H1 (cell line): ENCODE measurements at regions of chr5 and their contacts with region 1.

Region 1: DNA sequence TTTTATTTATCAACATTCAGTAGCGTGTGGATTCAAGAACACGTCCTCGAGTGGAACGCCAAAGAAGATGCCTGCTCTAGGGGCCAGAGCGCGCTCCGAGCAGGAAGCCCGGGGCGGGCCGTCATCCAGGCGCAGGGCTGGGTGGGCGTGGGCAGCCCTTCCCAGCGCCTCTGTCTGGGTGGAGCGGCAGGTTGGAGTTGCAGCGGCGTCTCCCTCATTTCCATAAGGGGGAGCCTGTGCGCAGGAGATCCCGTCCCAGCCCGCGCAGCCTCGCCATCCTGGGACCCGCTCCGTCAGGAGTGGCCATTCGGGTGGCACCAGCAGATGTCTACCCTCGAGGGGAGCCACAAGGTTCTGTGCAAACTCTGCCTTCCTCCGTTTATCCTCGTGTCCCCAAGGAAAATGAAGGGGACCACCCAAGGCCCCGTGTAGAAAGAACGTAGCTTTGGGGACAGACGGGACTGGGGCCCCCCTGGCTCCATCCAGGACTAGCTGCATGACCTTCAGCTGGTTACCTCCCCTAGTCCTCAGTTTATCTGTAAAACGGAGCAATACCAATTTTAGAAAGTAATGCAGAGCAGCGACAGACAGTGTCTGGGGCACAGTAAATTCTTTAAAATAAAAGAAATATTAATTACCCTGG is 155.5 kb upstream of the SMIM23 start:
- DNase-seq: peak in 1 of 2 experiments; percentile 82
- H3K4me3 ChIP-seq: peak overlapping the region in 3 of 4 experiments; percentile 17 to 50 (median 32); a peak in 5 of 8 replicates
- H3K27ac ChIP-seq: no peak overlapping the region
- H3K4me1 ChIP-seq: no peaks in the 10 kb centered on the region; a peak in 3 of 7 replicates
- H3K27me3 ChIP-seq: peaks cover 22 to 60% (median 54%) of the 10 kb centered on the region in 4 experiments
- CTCF ChIP-seq: peak; percentile 61 to 75 (median 62)
- EP300 ChIP-seq: no peak
- POLR2A ChIP-seq: no peak
- RAD21 ChIP-seq: peak; percentile 80 to 84

Region 2: DNA sequence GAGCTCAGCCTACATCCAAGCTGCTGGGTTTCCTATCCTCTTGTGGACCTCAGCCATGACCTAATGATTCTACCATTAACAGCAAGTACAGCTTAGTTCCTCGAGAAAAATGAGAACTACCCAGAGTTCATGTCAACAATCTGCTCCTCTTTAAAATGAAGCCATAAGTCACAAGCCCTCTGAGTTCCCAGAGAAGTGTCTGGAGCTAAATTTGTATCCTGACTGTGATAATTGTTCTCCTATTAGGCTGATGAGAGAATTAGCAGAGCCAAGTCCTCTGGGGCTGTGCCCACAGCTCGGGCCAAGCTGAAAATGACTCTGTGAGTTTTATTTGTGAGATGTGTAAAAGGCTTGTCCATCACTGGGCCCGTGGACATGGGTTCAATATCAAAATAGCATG is 10.3 kb after region 1 on chr5:
- CTCF ChIA-PET with region 1: interaction called, 23 read pairs
- POLR2A ChIA-PET with region 1: no interaction called
- DNase-seq: no peak
- H3K4me3 ChIP-seq: no peak overlapping the region
- H3K27ac ChIP-seq: no peak overlapping the region
- H3K4me1 ChIP-seq: peaks cover 0 to 4% (median 0%) of the 10 kb centered on the region in 4 experiments; a peak in 1 of 7 replicates
- H3K27me3 ChIP-seq: no peaks in the 10 kb centered on the region; a peak in 1 of 7 replicates
- CTCF ChIP-seq: no peak
- EP300 ChIP-seq: no peak
- POLR2A ChIP-seq: no peak
- RAD21 ChIP-seq: no peak

Region 3: GRCh38 chr5:171647032-171647903 is 17.1 kb after region 1 on chr5:
- CTCF ChIA-PET with region 1: interaction called, 15 read pairs
- POLR2A ChIA-PET with region 1: no interaction called
- DNase-seq: no peak
- H3K4me3 ChIP-seq: no peak overlapping the region
- H3K27ac ChIP-seq: no peak overlapping the region
- H3K4me1 ChIP-seq: peaks cover 0 to 8% (median 4%) of the 10 kb centered on the region in 4 experiments; a peak in 4 of 7 replicates
- H3K27me3 ChIP-seq: no peaks in the 10 kb centered on the region; a peak in 1 of 7 replicates
- CTCF ChIP-seq: no peak
- EP300 ChIP-seq: no peak
- POLR2A ChIP-seq: no peak
- RAD21 ChIP-seq: no peak

Region 4: DNA sequence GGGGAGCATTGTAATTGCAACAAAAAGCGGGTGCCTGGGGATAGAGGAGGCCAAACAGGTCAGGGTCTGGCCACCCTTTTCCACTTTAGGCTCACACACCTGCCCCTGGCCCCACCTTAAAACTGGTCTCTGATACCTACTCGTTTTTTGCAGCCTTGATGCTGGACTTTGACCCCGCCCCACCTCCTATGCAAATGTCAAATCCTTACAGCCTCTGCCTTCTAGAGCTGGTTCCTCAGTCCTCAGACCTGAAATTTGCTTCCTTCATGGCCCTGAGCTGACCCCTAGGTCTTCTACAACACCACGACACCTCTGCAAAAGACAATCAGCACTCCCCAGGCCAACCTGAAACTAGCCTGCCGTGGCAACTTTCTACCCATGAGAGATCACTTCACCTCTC is 193.1 kb after region 1 on chr5:
- CTCF ChIA-PET with region 1: interaction called, 17 read pairs
- POLR2A ChIA-PET with region 1: no interaction called
- DNase-seq: no peak
- H3K4me3 ChIP-seq: no peak overlapping the region
- H3K27ac ChIP-seq: no peak overlapping the region
- H3K4me1 ChIP-seq: no peaks in the 10 kb centered on the region
- H3K27me3 ChIP-seq: no peaks in the 10 kb centered on the region; a peak in 1 of 7 replicates
- CTCF ChIP-seq: no peak
- EP300 ChIP-seq: no peak
- POLR2A ChIP-seq: no peak
- RAD21 ChIP-seq: no peak